AG04449 (cell line): ENCODE measurements at regions of chr17 and their contacts with region 1.

Region 1: GRCh38 chr17:50397111-50397918 is at the start of gene LRRC59:
- DNase-seq: no peak
- H3K4me3 ChIP-seq: peak within 1 kb of the TSS; percentile 94
- CTCF ChIP-seq: peak; percentile 100

Region 2: DNA sequence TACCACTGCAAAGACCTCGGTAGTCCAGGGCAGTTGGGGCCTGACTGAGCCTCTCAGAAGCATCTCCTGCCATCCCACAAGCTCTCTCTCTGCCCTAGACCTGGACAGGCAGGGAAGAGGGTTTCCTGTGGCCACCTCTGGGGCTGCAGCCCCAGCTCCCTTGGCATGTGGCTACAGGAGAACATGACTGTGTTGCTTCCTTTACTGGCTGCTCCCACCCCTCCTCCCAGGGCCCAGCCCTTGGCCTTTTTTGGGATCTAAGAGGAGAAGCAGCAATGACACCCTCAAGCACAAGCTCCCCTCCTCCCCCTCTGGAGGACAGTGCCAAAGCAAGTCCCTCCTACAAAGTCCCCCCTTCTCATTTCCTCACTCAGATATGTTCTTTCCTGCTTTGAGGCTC is 29.9 kb before region 1 on chr17:
- CTCF ChIA-PET with region 1: interaction called, 52 read pairs
- POLR2A ChIA-PET with region 1: no interaction called
- DNase-seq: no peak
- H3K4me3 ChIP-seq: no peak overlapping the region
- CTCF ChIP-seq: no peak

Region 3: DNA sequence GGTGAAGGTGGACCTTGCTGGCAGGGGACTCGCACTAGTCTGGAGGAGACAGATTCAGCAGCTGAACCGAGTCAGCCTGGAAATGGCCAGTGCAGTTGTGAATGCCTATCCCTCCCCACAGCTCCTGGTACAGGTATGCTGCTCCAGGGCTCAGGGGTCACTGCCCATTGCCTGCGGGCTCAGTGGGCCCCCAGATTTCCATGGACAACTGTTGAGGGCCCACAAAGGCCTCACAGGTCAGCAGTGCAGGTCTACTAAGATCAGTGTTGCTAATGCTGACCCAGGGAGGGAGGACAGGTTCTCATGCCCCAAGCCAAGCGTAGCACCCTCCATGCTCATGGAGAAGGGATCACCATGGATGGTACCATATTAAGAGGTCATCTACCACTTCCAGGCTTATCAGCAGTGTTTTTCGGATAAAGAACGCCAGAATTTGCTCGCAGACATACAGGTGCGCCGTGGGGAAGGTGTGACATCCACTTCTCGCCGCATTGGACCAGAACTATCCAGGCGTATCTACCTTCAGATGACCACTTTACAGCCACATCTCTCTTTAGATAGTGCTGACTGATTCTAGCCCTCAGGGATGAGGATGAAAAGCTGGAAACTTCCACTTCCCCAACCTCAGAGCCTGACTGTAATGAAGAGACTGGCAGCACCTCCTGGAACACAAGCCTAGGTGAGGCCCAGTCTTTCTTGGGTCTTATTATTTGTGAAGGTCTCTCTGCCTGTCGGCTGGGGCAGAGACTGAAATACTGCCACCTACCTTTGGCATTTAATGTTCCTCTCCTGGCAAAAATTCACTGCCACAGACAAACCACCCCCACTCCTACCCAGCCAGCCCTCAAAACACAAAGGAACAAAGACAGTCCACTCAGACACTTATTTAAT is 16.7 kb before region 1 on chr17:
- CTCF ChIA-PET with region 1: interaction called, 139 read pairs
- POLR2A ChIA-PET with region 1: interaction called, 9 read pairs
- DNase-seq: no peak
- H3K4me3 ChIP-seq: no peak overlapping the region
- CTCF ChIP-seq: no peak

Region 4: GRCh38 chr17:50431233-50431632 is 33.9 kb after region 1 on chr17:
- CTCF ChIA-PET with region 1: interaction called, 35 read pairs
- POLR2A ChIA-PET with region 1: interaction called, 3 read pairs
- DNase-seq: no peak
- H3K4me3 ChIP-seq: no peak overlapping the region
- CTCF ChIP-seq: no peak

Region 5: GRCh38 chr17:50681263-50682210 is 284.2 kb after region 1 on chr17:
- CTCF ChIA-PET with region 1: no interaction called
- POLR2A ChIA-PET with region 1: no interaction called
- DNase-seq: no peak
- H3K4me3 ChIP-seq: no peak overlapping the region
- CTCF ChIP-seq: peak; percentile 80